HEK293T (cell line): ENCODE measurements at regions of chr1 and their contacts with region 1.

Region 1: GRCh38 chr1:208238710-208239472 is 5.3 kb downstream of the PLXNA2 start:
- DNase-seq: peak; percentile 60

Region 2: GRCh38 chr1:208025031-208025430 is 213.9 kb before region 1 on chr1:
- CTCF ChIA-PET with region 1: interaction called, 45 read pairs
- POLR2A ChIA-PET with region 1: interaction called, 4 read pairs
- DNase-seq: no peak

Region 3: GRCh38 chr1:208132287-208132883 is 106.5 kb before region 1 on chr1:
- CTCF ChIA-PET with region 1: interaction called, 17 read pairs
- POLR2A ChIA-PET with region 1: no interaction called
- DNase-seq: peak; percentile 92

Region 4: DNA sequence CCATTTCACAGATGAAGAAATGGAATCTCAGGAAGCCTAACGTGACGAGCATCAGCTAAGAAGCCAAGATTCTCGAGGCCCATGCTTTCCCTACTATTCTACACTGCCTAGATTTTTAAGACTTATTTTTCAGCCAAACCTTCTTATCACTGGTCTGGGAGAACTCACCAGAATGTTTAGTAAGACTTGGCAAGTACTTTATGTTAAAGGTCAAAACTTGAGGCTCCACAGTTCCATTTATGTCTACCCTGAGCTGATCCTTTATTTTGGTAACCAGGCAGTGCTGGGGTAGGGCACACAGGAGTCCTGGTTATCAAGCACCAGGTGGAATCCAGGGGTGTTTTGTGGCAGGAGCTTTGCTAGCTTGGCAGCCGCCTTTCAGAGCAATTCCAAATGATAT is 11.5 kb before region 1 on chr1:
- CTCF ChIA-PET with region 1: interaction called, 12 read pairs
- POLR2A ChIA-PET with region 1: interaction called, 5 read pairs
- DNase-seq: no peak